ENCODE measurements at regions of chr9 and their contacts with region 1.

Region 1: GRCh38 chr9:20538956-20539355 is 83.3 kb downstream of the MLLT3 start:
- DNase-seq: no peak
- H3K4me3 Mint-ChIP-seq: no peak overlapping the region
- H3K27ac Mint-ChIP-seq: no peak overlapping the region
- H3K4me1 Mint-ChIP-seq: peaks cover 62% of the 10 kb centered on the region
- H3K27me3 Mint-ChIP-seq: no peaks in the 10 kb centered on the region

Region 2: DNA sequence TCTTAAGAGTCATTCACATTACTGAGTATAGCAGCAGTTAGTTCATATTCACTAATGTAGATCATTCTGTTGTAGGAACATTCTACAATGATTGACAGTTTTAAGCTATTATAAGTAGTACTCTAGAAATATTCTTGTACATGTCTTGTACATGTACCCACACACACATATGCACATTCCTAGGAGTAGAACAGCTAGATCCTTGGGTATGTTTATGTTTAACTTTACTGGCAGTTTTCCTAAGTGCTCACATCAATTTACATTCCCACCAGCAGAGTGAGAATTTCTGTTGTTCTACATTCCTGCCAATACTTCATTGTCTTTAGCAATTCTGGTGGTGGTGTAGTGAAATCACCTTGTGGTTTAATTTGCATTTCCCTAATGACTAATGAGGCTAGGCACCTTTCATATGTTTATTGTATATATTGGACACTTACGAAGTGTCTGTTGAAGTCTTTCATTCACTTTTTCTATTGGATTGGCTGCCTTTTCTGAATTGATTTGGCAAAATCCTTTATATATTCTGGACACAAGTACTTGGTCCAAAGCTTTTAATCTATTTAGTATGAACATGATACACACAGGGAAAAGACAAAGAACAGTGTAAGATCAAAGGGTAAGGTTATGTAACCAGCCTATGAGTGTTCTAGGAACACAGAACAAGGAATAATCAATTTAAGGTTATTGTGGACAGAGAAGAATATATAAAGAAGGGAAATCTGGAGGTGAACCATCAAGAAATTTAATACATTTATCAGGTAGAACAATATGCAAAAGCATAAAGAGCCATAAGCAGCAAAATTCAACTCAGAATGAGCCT is 12.2 kb before region 1 on chr9:
- CTCF ChIA-PET with region 1: interaction called, 4 read pairs
- intact Hi-C with region 1: loop called (anchors 1 kb)
- DNase-seq: no peak
- H3K4me3 Mint-ChIP-seq: no peak overlapping the region
- H3K27ac Mint-ChIP-seq: no peak overlapping the region
- H3K4me1 Mint-ChIP-seq: peaks cover 80% of the 10 kb centered on the region
- H3K27me3 Mint-ChIP-seq: no peaks in the 10 kb centered on the region